Common myeloid progenitor, CD34-positive (primary cell): ENCODE measurements at regions of chr7 and their contacts with region 1.

Region 1: GRCh38 chr7:19665399-19666008 is 43.3 kb downstream of the POLR1F start:
- DNase-seq: peak; percentile 40 to 57 (median 54)
- H3K4me3 ChIP-seq: no peak overlapping the region
- H3K27ac ChIP-seq: no peak overlapping the region
- H3K4me1 ChIP-seq: peaks cover 5 to 22% (median 12%) of the 10 kb centered on the region in 4 experiments
- H3K27me3 ChIP-seq: no peaks in the 10 kb centered on the region

Region 2: GRCh38 chr7:19121977-19122588 is 543.4 kb before region 1 on chr7:
- CTCF ChIA-PET with region 1: interaction called, 14 read pairs
- POLR2A ChIA-PET with region 1: no interaction called
- DNase-seq: peak; percentile 58 to 63 (median 62)
- H3K4me3 ChIP-seq: no peak overlapping the region
- H3K27ac ChIP-seq: no peak overlapping the region
- H3K4me1 ChIP-seq: peaks cover 0 to 20% (median 16%) of the 10 kb centered on the region in 4 experiments
- H3K27me3 ChIP-seq: peaks cover 30 to 48% (median 33%) of the 10 kb centered on the region in 5 experiments

Region 3: DNA sequence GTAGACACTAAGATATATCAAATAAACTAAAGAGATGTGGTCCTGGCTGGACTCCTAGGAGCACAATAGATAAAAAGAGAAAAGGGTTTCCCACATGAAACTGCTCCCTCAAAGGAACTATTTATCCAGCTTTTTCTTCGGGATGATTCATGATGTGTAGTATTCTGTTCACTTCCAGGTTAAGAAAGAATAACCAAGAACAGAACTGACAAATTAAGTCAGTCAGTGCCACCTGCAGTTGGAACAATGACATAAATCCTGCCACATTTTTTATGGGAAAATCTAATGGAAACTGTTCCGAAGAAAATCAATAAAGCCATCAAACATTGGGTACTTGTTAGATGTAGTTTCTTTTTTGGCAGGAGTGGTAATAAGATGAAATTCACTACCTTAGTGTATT is 43.8 kb before region 1 on chr7:
- CTCF ChIA-PET with region 1: no interaction called
- POLR2A ChIA-PET with region 1: no interaction called
- DNase-seq: no peak
- H3K4me3 ChIP-seq: no peak overlapping the region
- H3K27ac ChIP-seq: no peak overlapping the region
- H3K4me1 ChIP-seq: no peaks in the 10 kb centered on the region
- H3K27me3 ChIP-seq: no peaks in the 10 kb centered on the region